ENCODE measurements at regions of chr4 and their contacts with region 1.

Region 1: GRCh38 chr4:41281038-41281634 is 24.4 kb downstream of the UCHL1 start:
- DNase-seq: peak in 1 of 2 donors; percentile 62
- ATAC-seq: peak; percentile 92 to 96 (median 94)
- H3K4me3 ChIP-seq: no peak overlapping the region
- H3K27ac ChIP-seq: no peak overlapping the region
- H3K4me1 ChIP-seq: peaks cover 0 to 5% (median 0%) of the 10 kb centered on the region in 9 donors
- H3K27me3 ChIP-seq: peaks cover 0 to 6% (median 0%) of the 10 kb centered on the region in 7 donors
- CTCF ChIP-seq: peak; percentile 72 to 93 (median 86)

Region 2: GRCh38 chr4:41427306-41427882 is 146.3 kb after region 1 on chr4:
- intact Hi-C with region 1: loop called in 1 of 10 experiments (anchors 10 kb)
- DNase-seq: no peak
- ATAC-seq: peak in 6 of 8 donors; percentile 46 to 72 (median 60)
- H3K4me3 ChIP-seq: no peak overlapping the region
- H3K27ac ChIP-seq: peak overlapping the region; percentile 15 to 89 (median 69)
- H3K4me1 ChIP-seq: peaks cover 4 to 92% (median 80%) of the 10 kb centered on the region in 9 donors
- H3K27me3 ChIP-seq: no peaks in the 10 kb centered on the region
- CTCF ChIP-seq: no peak

Region 3: DNA sequence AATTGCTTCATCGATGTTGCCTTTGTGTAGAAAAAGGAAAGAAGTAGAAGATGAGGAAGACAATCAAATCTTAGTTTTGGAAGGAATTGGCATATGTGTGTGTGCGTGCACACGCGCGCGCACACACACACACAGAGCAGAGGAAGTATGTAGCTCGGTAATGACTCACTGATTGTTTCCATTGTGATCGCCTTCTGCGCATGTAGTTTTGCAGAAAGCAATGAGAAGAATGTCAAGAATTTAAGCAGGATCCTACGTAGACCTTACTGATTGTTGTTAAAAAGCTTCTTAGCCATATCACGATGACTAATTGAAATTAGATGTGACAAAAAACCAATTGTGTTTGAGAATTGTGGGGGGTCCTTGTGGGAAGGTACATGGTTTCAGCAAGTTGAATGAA is 244.0 kb after region 1 on chr4:
- intact Hi-C with region 1: loop called in 2 of 10 experiments (anchors 10 kb)
- DNase-seq: peak in 1 of 2 donors; percentile 36
- ATAC-seq: peak; percentile 61 to 89 (median 78)
- H3K4me3 ChIP-seq: no peak overlapping the region
- H3K27ac ChIP-seq: peak overlapping the region in 7 of 10 donors; percentile 6 to 72 (median 46)
- H3K4me1 ChIP-seq: peaks cover 0 to 67% (median 27%) of the 10 kb centered on the region in 9 donors
- H3K27me3 ChIP-seq: no peaks in the 10 kb centered on the region
- CTCF ChIP-seq: no peak

Region 4: DNA sequence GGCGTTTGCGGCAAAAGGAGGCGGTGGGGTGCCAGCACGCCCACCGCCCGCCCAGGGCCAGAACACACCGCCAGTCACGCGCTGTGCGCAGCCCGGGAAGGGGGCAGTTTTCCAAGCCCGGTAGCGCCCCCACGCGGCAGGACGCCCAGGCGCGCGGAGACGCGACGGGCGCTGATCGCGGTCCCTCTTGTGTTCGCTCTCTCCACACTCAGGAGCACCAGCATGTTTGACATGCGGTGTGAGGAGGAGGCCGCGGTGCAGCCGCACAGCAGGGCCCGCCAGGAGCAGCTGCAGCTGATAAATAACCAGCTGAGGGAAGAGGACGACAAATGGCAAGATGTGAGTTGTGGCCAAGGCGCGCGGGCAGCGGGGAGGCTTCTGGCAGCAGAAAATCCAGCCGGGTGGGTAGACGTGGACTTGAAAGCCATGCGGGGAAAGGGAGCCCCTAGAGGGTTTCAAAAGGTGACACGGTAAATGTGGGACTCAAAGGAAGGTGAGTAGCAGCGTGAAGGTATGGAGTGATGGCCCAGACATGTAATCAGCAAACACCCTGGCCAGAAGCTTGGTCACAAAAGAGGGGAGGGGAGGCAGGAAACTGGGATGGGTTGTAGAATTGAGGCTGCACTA is 363.3 kb after region 1 on chr4:
- intact Hi-C with region 1: loop called in 5 of 10 experiments (anchors 5 kb)
- DNase-seq: peak; percentile 76 to 82
- ATAC-seq: peak; percentile 91 to 95 (median 94)
- H3K4me3 ChIP-seq: peak overlapping the region in 6 of 10 donors; percentile 12 to 27 (median 20)
- H3K27ac ChIP-seq: peak overlapping the region in 3 of 10 donors; percentile 2 to 51 (median 14)
- H3K4me1 ChIP-seq: peaks cover 0 to 45% (median 23%) of the 10 kb centered on the region in 9 donors
- H3K27me3 ChIP-seq: peaks cover 0 to 22% (median 0%) of the 10 kb centered on the region in 7 donors
- CTCF ChIP-seq: peak; percentile 84 to 97 (median 91)

Region 5: DNA sequence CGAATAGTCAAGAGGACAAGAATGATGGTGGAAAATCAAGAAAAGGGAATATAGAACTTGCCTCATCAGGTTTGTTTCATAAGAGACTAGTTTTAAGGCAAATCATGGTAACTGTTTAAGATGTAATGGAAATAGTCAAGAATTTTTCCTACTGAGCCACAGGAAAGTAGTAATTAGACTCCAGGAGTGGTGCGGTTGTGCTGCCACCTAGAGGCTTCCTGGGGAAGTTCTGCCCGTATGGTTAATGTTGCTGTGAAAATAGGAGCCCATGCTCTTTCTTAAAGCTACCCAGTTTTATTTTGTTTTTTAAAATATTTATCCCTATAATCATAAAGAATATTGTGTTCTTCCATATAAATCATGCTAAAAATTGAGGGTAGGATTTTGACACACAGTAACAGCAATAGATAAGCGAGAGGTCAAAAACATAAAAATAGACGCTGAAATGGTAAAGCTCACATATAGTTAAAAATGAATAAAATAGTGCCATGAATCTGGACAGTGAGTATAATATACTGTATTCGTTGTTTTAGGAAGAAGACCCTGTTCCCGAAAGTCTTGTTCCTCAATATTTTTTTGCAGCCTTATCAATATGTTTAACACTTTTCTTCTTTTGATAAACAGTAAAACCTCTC is 380.4 kb after region 1 on chr4:
- intact Hi-C with region 1: loop called in 9 of 10 experiments (anchors 1 to 5 kb)
- DNase-seq: peak; percentile 56 to 60
- ATAC-seq: peak in 6 of 8 donors; percentile 40 to 65 (median 48)
- H3K4me3 ChIP-seq: no peak overlapping the region
- H3K27ac ChIP-seq: peak overlapping the region in 1 of 10 donors; percentile 49
- H3K4me1 ChIP-seq: peaks cover 3 to 25% (median 9%) of the 10 kb centered on the region in 9 donors
- H3K27me3 ChIP-seq: no peaks in the 10 kb centered on the region
- CTCF ChIP-seq: peak in 8 of 9 donors; percentile 90 to 97 (median 96)

Region 6: GRCh38 chr4:41882625-41883347 is 601.6 kb after region 1 on chr4:
- intact Hi-C with region 1: loop called in 9 of 10 experiments (anchors 5 to 10 kb)
- DNase-seq: peak; percentile 24 to 49
- ATAC-seq: peak; percentile 52 to 89 (median 82)
- H3K4me3 ChIP-seq: peak overlapping the region; percentile 16 to 48 (median 40)
- H3K27ac ChIP-seq: no peak overlapping the region
- H3K4me1 ChIP-seq: peaks cover 8 to 37% (median 28%) of the 10 kb centered on the region in 9 donors
- H3K27me3 ChIP-seq: peaks cover 8 to 98% (median 87%) of the 10 kb centered on the region in 7 donors
- CTCF ChIP-seq: peak; percentile 78 to 98 (median 96)

Region 7: DNA sequence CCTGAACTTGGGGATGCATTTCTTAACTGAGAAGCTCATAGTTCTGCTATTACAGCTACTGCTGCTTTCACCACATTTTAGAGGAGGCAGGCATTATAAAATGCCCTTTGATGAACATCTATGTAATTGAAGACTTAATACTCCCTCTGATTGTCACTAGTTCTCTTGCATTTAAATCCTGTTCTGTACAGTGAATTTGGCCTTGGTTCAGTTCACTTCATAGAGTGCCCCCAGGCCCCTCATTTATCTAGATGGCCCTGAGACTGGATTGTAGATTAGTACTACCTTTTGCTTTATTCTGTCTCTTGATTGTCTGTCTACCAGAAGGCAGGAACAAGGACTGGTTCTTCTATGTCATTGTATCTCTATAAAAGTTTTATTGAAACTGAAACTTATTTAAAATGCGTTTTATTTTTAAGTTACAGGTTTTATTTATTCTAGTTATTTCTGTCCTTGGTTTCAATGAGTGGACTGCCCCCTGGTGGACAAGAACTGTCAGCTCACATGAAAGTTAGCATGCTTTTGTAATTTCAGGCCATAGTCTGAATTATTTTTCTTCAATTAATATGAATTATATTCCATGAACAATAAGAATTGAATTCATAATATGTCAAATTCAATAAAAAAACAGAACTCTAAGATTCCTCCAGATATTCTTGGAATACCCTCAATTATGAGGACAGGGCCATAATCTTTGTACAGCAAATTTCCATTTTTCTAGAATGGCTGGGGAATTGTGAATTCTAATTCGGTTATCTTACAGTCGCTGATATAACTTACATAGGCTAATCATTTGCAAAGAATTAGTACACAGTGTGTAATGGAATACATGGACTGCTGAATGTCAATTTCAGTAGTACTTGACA is 606.9 kb after region 1 on chr4:
- intact Hi-C with region 1: loop called in 9 of 10 experiments (anchors 5 to 10 kb)
- DNase-seq: no peak
- ATAC-seq: no peak
- H3K4me3 ChIP-seq: no peak overlapping the region
- H3K27ac ChIP-seq: no peak overlapping the region
- H3K4me1 ChIP-seq: no peaks in the 10 kb centered on the region
- H3K27me3 ChIP-seq: peaks cover 0 to 73% (median 41%) of the 10 kb centered on the region in 7 donors
- CTCF ChIP-seq: peak; percentile 74 to 95 (median 91)